Activated B cell treated with CpG ODN at 0.5 μM for 24 hours (primary cell): ENCODE measurements at regions of chr6 and their contacts with region 1.

Region 1: GRCh38 chr6:41531591-41532582 is 14.3 kb upstream of the FOXP4 start:
- DNase-seq: peak; percentile 64
- ATAC-seq: peak; percentile 81
- H3K4me3 Mint-ChIP-seq: peak overlapping the region; percentile 83
- H3K27ac Mint-ChIP-seq: peak overlapping the region; percentile 95
- H3K4me1 Mint-ChIP-seq: peaks cover 73% of the 10 kb centered on the region
- H3K27me3 Mint-ChIP-seq: no peaks in the 10 kb centered on the region
- CTCF ChIP-seq: no peak

Region 2: DNA sequence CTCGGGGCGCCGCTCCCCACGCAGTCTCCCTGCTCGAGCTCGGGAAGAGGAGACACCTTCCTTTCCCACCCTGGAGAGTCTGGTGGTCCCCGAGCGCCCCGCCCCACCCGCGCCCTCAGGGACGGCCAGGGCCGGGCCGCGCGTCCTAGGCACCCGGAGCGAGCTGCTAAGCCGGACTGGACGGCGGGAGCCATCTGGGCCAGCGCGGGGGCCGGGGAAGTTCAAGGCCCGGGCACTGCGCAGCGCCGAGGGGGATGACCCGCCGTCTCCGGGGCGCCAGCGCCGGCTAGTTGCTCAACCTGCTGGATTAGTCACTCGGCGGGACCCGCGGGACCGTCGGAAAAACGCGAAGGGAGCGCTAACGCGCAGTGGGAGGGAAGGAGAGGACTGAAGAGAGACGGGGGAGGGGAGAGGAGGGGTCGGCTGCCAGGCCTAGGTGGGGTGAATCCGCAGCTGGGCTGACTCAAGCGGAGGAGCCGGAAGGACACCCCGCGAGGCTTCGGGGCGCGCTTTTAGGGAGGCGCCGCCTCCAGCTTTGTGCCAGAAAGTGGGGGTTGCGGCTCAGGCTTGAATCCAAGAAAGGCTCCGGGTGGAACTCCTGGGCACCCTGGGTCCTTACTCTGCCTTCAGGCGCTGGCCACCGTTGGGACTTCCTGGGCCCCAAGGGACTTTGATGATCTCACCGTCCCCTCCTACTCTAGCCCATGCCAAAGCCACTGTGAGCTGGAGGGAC is 61.4 kb before region 1 on chr6:
- CTCF ChIA-PET with region 1: no interaction called
- POLR2A ChIA-PET with region 1: no interaction called
- intact Hi-C with region 1: loop called (anchors 2 kb)
- DNase-seq: no peak
- ATAC-seq: peak; percentile 45
- H3K4me3 Mint-ChIP-seq: peak overlapping the region; percentile 66
- H3K27ac Mint-ChIP-seq: no peak overlapping the region
- H3K4me1 Mint-ChIP-seq: peaks cover 20% of the 10 kb centered on the region
- H3K27me3 Mint-ChIP-seq: peaks cover 54% of the 10 kb centered on the region
- CTCF ChIP-seq: no peak

Region 3: GRCh38 chr6:41505122-41506049 is 26.5 kb before region 1 on chr6:
- CTCF ChIA-PET with region 1: interaction called, 3 read pairs
- POLR2A ChIA-PET with region 1: interaction called, 97 read pairs
- intact Hi-C with region 1: loop called (anchors 1 kb)
- DNase-seq: peak; percentile 66
- ATAC-seq: peak; percentile 86
- H3K4me3 Mint-ChIP-seq: peak overlapping the region; percentile 81
- H3K27ac Mint-ChIP-seq: peak overlapping the region; percentile 92
- H3K4me1 Mint-ChIP-seq: peaks cover 43% of the 10 kb centered on the region
- H3K27me3 Mint-ChIP-seq: no peaks in the 10 kb centered on the region
- CTCF ChIP-seq: no peak

Region 4: DNA sequence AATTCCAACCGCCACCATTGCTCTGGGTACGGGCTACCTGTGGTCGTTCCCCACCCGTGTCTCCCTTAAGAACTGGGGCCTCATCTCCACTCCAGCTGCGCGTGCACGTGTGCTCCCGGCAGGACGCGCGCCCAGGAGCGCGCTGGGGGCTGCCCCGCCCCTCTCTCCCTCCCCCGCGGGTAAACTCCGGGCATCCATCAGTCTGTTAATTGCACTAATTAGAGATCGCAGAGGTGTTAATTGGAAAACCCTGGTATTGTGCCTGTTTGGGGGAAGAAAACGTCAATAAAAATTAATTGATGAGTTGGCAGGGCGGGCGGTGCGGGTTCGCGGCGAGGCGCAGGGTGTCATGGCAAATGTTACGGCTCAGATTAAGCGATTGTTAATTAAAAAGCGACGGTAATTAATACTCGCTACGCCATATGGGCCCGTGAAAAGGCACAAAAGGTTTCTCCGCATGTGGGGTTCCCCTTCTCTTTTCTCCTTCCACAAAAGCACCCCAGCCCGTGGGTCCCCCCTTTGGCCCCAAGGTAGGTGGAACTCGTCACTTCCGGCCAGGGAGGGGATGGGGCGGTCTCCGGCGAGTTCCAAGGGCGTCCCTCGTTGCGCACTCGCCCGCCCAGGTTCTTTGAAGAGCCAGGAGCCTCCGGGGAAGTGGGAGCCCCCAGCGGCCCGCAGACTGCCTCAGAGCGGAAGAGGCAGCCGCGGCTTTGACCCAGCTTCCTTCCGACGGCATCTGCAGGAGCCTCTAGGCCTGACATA is 28.7 kb after region 1 on chr6:
- CTCF ChIA-PET with region 1: no interaction called
- POLR2A ChIA-PET with region 1: interaction called, 6 read pairs
- intact Hi-C with region 1: loop called (anchors 1 kb)
- DNase-seq: peak; percentile 55
- ATAC-seq: peak; percentile 85
- H3K4me3 Mint-ChIP-seq: peak overlapping the region; percentile 89
- H3K27ac Mint-ChIP-seq: peak overlapping the region; percentile 75
- H3K4me1 Mint-ChIP-seq: peaks cover 35% of the 10 kb centered on the region
- H3K27me3 Mint-ChIP-seq: no peaks in the 10 kb centered on the region
- CTCF ChIP-seq: no peak

Region 5: GRCh38 chr6:41591859-41592502 is 60.1 kb after region 1 on chr6:
- CTCF ChIA-PET with region 1: no interaction called
- POLR2A ChIA-PET with region 1: no interaction called
- intact Hi-C with region 1: loop called (anchors 1 kb)
- DNase-seq: peak; percentile 73
- ATAC-seq: peak; percentile 85
- H3K4me3 Mint-ChIP-seq: no peak overlapping the region
- H3K27ac Mint-ChIP-seq: no peak overlapping the region
- H3K4me1 Mint-ChIP-seq: peaks cover 4% of the 10 kb centered on the region
- H3K27me3 Mint-ChIP-seq: no peaks in the 10 kb centered on the region
- CTCF ChIP-seq: peak; percentile 19